GM10248 (cell line): ENCODE measurements at regions of chr4 and their contacts with region 1.

Region 1: GRCh38 chr4:7067452-7068278 is at the start of gene GRPEL1:
- DNase-seq: peak; percentile 98
- CTCF ChIP-seq: no peak

Region 2: GRCh38 chr4:6716018-6716911 is 351.4 kb before region 1 on chr4 and contains the start of gene BLOC1S4:
- CTCF ChIA-PET with region 1: interaction called, 61 read pairs
- POLR2A ChIA-PET with region 1: no interaction called
- DNase-seq: peak; percentile 95
- CTCF ChIP-seq: no peak

Region 3: DNA sequence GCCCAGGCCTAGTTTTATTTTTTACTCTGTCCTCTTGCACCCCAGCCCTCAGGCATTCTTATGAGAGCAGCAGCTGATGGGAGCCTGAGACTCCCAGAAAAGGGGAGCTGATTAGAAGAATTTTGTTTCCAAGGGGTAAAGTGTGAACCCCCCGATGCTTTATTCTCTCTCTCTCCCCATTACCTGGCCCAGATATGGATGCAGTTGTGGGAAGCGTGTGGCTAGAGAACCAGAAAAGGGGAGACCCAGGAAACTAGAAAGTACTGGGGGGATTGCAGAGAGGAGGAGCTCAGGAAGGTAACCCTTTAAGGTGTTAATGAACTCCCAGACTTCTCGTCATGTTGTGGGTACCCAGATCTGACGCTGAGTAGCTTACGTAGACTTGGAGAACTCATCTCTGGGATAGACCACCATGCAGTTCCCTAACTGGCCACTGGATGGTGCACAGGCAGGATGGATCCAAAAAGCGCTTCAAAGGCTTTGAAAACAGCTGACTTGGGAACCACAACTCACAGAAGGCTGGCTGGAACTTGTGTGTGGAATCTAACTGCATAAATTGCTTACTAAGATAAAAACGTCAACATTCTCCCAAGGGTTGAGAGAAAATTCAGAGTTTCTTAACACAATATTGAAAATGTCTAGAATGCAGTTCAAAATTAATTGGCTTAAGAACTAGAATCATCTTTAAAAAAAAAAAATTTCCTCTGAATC is 93.4 kb before region 1 on chr4:
- CTCF ChIA-PET with region 1: interaction called, 30 read pairs
- POLR2A ChIA-PET with region 1: interaction called, 3 read pairs
- DNase-seq: peak; percentile 74
- CTCF ChIP-seq: peak; percentile 75

Region 4: DNA sequence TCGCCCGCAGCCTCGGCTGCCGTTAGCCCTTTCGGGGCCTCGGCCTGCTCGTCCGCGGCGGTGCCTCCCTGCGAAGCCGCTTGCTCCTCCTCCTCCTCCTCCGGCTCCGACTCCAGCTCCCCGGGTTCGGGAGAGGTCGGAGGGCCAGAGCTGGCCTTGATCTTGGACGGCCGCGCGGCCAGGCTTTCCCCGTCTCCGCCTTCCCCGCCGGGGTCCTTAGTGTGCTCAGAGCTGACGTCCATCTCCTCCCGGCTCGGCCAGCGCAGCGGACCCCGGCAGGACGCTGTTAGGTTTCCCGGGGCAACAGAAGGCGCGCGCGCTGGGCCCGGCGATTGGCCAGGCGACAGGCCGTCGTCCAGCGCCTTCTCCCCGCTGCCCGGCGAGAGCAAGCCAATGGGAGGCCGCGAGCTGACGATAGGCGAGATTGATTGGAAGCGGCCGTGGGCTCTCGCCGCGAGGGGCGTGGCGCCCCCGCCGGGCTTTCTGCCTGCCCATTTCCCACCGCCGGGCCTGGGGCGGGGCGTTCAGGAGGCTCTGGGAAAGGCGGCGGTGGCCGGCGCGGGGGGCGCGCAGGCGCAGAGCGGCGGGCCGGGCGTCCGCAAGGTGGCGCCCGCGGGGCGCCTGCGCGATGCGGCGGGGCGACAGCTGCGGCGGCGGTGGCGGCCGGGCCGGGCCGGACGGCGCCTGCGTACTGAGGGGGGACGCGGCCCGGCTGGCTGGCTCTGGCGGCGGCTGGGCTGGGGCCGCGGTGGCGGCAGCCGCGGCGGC is 24.8 kb before region 1 on chr4 and contains the start of gene TADA2B:
- CTCF ChIA-PET with region 1: interaction called, 115 read pairs
- POLR2A ChIA-PET with region 1: interaction called, 16 read pairs
- DNase-seq: peak; percentile 99
- CTCF ChIP-seq: peak; percentile 70

Region 5: GRCh38 chr4:7081891-7082471 is 14.3 kb after region 1 on chr4:
- CTCF ChIA-PET with region 1: interaction called, 59 read pairs
- POLR2A ChIA-PET with region 1: interaction called, 4 read pairs
- DNase-seq: peak; percentile 66
- CTCF ChIP-seq: peak; percentile 55